ENCODE measurements at regions of chr16 and their contacts with region 1.

Region 1: GRCh38 chr16:30378236-30379204 is 3.8 kb downstream of the SEPTIN1 start:
- DNase-seq: peak; percentile 94
- ATAC-seq: peak; percentile 98
- H3K4me3 ChIP-seq: peak overlapping the region; percentile 71
- H3K27ac ChIP-seq: peak overlapping the region; percentile 83
- H3K4me1 ChIP-seq: peaks cover 7% of the 10 kb centered on the region
- H3K27me3 ChIP-seq: no peaks in the 10 kb centered on the region
- CTCF ChIP-seq: peak; percentile 35
- POLR2A ChIP-seq: peak; percentile 30; the same call in 1 of the 2 replicates
- RAD21 ChIP-seq: peak; percentile 28; the same call in 1 of the 2 replicates

Region 2: DNA sequence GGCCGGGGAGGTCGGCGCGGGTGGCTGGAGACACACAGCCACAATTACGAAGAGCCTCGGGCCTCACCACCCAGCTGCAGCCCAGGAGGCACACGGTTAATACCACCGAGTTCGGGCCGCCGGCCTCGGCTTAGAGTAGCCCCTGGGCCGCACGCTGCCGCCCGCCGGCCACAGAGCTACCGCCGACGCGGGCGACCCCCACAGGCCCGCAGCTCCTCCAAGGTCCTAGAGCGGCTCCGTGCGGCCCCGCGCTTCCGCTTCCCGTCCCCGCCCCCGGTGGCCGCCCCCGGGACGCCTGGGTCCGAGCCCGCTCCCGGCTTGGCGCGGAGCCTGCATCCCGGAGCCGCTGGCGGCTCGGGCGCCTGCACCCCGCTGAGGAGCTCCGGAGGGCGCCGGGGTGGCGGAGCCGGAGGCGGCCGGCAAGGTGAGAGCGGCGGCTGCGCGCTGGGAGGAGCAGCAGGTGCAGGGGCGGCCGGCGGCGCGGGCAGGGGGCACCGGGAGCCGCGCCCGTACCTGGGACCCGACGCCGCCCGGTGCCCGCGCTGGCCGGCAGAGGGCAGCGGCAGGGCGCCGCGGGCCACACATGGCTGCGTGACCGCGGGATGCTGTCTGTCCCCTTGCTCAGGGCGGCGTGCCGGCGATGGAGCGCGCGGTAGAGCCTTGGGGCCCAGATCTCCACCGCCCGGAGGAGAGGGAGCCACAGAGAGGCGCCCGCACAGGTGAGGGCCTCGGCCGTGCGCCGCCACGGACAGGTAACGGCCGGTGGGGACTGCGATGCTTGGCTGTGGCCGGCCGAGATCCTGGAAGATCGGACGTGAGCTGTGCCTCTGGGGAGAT is 16.9 kb after region 1 on chr16 and contains the start of gene ZNF48:
- CTCF ChIA-PET with region 1: no interaction called
- POLR2A ChIA-PET with region 1: interaction called, 3 read pairs
- dilution Hi-C with region 1: no loop called
- in situ Hi-C with region 1: no loop called
- intact Hi-C with region 1: loop called (anchors 2 kb)
- DNase-seq: peak; percentile 90
- ATAC-seq: peak; percentile 93
- H3K4me3 ChIP-seq: peak within 1 kb of the TSS; percentile 95
- H3K27ac ChIP-seq: peak within 1 kb of the TSS; percentile 82
- H3K4me1 ChIP-seq: peaks cover 10% of the 10 kb centered on the region
- H3K27me3 ChIP-seq: no peaks in the 10 kb centered on the region
- CTCF ChIP-seq: peak; percentile 38
- POLR2A ChIP-seq: no peak
- RAD21 ChIP-seq: peak; percentile 16
- total RNA-seq, gene ZNF48: 6.6 and 6.9 TPM in 2 replicates

Measured in IMR-90 (cell line).